ENCODE measurements at regions of chr5 and their contacts with region 1.

Region 1: DNA sequence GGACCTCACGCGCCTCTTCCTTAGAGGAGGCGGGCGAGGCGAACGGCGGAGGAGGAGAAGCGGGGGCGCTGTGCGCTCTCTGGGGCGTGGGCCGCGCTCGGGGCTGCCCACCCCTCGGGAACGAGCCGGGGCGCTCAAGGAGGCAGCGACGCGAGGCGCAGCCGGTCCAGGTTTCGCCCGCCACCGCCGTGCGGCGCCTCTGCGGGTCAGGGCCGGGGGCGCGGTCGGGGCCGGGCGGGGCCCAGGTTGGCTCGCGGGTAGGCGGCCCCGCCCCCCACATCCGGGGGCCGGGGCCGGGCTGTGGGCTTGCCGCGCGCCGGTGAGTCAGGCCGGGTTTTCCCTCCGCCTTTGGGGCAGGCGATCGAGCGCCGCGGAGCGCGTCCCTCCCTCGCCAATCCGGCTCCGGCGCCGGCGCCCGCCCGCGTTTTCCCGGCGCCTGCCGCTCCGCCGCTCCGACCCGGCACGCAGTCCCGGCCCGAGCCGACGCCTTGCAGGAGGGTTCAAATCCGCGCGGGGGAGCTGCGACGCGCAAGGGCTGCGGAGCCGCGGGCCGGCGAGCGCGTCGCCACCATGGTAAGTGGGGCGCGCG is at the start of gene N4BP3:
- DNase-seq: peak; percentile 92
- ATAC-seq: peak; percentile 70
- H3K4me3 Mint-ChIP-seq: peak within 1 kb of the TSS; percentile 98
- H3K27ac Mint-ChIP-seq: peak within 1 kb of the TSS; percentile 94
- H3K4me1 Mint-ChIP-seq: peaks cover 65% of the 10 kb centered on the region
- H3K27me3 Mint-ChIP-seq: no peaks in the 10 kb centered on the region
- CTCF ChIP-seq: no peak
- total RNA-seq, gene N4BP3: 17.4 and 18.1 TPM in 2 replicates

Region 2: DNA sequence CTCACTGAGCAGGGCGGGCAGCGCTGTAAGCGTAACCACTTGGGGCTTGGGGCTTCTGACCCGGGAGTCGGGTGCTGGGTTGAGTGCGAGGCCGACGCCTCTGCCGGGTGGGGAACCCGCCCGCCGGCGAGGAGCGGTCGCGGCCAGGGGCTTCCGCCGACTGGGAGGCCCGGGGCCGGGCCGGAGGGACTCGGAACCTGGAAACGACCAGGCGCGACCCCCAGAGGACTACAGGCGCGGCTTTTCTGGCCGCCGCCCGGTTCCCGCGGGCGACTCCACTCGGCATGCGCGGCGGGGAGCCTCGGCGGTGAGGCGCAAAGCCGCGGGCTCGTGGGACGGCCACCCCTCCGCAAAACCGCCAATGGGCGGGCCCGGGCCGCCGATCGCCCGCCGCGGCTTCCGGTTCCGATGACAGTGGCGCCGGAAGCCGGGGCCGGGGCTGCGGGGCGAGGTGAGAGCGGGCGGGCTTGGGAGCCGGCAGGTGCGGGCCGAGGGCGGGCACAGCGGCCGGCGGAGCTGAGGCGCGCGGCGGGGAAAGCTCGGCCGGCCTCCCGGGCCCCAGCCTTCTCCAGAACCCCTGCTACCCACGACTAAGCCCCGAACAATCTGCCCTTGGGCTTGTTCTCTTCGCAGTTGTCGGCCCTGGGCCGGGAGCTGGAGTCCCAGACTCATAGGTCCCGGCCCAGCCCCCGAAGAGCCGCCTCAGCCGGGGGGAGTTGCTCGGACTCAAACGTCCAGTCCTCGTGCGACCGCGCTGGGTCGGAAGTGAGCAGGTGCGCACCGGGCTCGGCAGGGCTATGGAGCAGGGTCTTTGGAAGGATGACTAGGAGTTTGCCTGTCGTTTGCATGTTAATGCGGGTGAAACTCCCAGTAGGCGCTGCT is 17.6 kb after region 1 on chr5 and contains the start of gene RMND5B:
- CTCF ChIA-PET with region 1: interaction called, 4 read pairs
- POLR2A ChIA-PET with region 1: interaction called, 28 read pairs
- intact Hi-C with region 1: loop called (anchors 1 kb)
- DNase-seq: peak; percentile 86
- ATAC-seq: peak; percentile 89
- H3K4me3 Mint-ChIP-seq: peak within 1 kb of the TSS; percentile 85
- H3K27ac Mint-ChIP-seq: peak within 1 kb of the TSS; percentile 74
- H3K4me1 Mint-ChIP-seq: peaks cover 21% of the 10 kb centered on the region
- H3K27me3 Mint-ChIP-seq: no peaks in the 10 kb centered on the region
- CTCF ChIP-seq: no peak
- total RNA-seq, gene RMND5B: 42.4 and 57.2 TPM in 2 replicates

Measured in activated B cell treated with CpG ODN at 0.5 μM for 24 hours (primary cell).